Mammary epithelial cell (primary cell): ENCODE measurements at regions of chr3 and their contacts with region 1.

Region 1: DNA sequence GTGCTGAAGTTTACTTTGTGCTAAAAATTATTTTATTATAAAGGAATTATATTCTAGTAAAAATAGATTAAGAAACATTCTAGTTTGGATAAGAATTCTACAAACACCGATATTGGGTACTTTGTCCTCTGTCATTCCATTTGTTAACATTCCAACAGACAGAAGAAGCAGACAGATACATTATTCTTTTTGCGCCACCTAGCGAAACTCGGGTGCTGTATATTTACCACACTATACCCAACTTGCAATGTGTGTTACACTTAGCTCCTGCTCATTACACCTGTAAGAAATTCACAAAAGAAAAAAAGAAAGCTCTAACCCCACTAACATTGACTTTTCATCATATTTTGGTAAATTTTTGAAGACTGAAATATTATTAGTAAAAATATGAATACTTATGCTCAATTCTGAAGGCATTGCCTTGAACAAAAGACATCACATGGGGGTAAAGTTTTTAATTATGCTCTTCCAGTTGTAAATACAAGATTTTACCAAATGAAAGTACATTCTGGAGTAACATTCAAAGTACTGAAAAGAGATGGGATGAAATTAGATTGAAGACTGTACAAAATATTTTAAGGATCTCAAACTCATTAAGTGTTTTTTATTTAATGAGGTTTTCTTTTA is 136.5 kb upstream of the MLF1 start:
- DNase-seq: peak; percentile 63
- H3K4me3 ChIP-seq: no peak overlapping the region
- H3K27ac ChIP-seq: no peak overlapping the region
- H3K4me1 ChIP-seq: no peaks in the 10 kb centered on the region
- H3K27me3 ChIP-seq: no peaks in the 10 kb centered on the region
- CTCF ChIP-seq: peak; percentile 78 to 79

Region 2: GRCh38 chr3:157606011-157606851 is 828.3 kb before region 1 on chr3:
- CTCF ChIA-PET with region 1: interaction called, 6 read pairs
- dilution Hi-C with region 1: no loop called
- in situ Hi-C with region 1: loop called in 1 of 2 experiments (anchors 25 kb)
- intact Hi-C with region 1: no loop called
- DNase-seq: peak; percentile 47
- H3K4me3 ChIP-seq: no peak overlapping the region
- H3K27ac ChIP-seq: no peak overlapping the region
- H3K4me1 ChIP-seq: no peaks in the 10 kb centered on the region
- H3K27me3 ChIP-seq: no peaks in the 10 kb centered on the region
- CTCF ChIP-seq: peak; percentile 70 to 86

Region 3: DNA sequence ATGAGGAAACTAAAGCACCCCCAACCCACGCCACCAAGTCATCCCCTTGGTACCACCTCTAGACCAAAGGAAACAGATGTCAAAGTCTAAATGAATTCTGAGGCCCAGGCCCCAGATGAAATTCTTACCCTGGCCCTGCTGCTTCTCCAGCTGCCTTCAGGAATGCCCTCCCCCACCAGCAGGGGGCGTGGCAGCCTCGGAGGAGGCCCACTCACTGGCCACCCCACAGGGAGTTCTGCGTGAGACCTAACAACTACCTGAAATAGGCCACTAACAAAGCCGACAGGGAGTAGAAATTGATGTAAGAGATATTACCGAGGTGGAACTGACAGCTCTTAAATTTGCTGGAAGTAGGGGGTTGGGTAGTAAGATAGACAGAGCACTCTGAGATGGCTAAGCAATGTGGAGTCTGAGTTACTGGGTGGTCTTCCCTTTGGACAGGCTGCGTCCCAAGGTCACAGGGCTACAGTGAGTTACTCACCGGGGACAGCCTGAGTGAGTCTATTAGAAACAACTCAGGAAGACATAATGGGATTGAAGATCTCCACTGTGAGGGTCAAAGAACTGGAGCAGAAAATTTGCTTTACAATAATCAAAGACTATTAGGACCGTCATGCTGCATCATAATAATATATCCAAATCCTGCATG is 569.0 kb before region 1 on chr3:
- CTCF ChIA-PET with region 1: no interaction called
- dilution Hi-C with region 1: no loop called
- in situ Hi-C with region 1: no loop called
- intact Hi-C with region 1: loop called (anchors 1 kb)
- DNase-seq: peak; percentile 8
- H3K4me3 ChIP-seq: no peak overlapping the region
- H3K27ac ChIP-seq: no peak overlapping the region
- H3K4me1 ChIP-seq: no peaks in the 10 kb centered on the region
- H3K27me3 ChIP-seq: no peaks in the 10 kb centered on the region
- CTCF ChIP-seq: peak; percentile 72 to 76

Region 4: DNA sequence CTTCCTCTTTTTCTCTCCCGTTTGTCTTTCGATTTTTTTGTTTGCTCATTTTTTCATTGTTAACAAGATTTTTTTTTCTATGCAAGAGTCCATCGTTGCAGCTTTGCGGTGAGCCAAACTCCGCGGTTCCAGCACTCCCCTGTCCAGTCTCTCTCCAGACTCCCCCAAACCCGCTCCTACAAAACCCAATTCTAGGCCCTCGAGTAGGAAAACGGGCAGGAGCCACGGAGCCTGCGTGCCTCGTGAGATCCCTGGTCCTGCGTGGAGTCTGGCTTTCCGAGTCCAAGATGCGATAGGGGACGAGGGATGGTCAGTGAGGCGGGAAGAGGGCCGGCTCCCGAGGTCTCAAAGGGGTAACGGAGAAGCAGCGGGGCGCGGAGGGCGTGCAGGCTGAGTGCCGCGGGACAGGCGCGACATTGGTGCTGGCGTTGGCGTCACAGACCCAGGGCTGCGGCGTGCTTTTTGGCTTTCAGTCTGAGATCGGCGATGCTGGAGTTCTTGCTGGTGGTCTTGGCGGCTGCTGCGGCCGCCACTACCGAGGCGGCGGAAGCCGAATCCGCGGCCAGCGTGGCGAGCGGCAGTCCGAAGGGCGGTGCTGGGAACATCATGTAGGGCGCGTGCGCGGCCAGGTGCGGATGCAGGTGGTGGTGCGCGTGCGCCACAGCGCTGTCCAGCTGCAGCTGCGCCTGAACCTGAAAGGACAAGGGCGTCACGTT is 336.8 kb before region 1 on chr3:
- CTCF ChIA-PET with region 1: no interaction called
- dilution Hi-C with region 1: no loop called
- in situ Hi-C with region 1: loop called in 1 of 2 experiments (anchors 25 kb)
- intact Hi-C with region 1: no loop called
- DNase-seq: peak; percentile 80
- H3K4me3 ChIP-seq: peak overlapping the region; percentile 47 to 84 (median 68)
- H3K27ac ChIP-seq: no peak overlapping the region
- H3K4me1 ChIP-seq: peaks cover 6% of the 10 kb centered on the region
- H3K27me3 ChIP-seq: peaks cover 58% of the 10 kb centered on the region
- CTCF ChIP-seq: no peak

Region 5: GRCh38 chr3:158261371-158261979 is 173.1 kb before region 1 on chr3:
- CTCF ChIA-PET with region 1: interaction called, 4 read pairs
- dilution Hi-C with region 1: no loop called
- in situ Hi-C with region 1: no loop called
- intact Hi-C with region 1: loop called (anchors 2 kb)
- DNase-seq: no peak
- H3K4me3 ChIP-seq: no peak overlapping the region
- H3K27ac ChIP-seq: no peak overlapping the region
- H3K4me1 ChIP-seq: no peaks in the 10 kb centered on the region
- H3K27me3 ChIP-seq: no peaks in the 10 kb centered on the region
- CTCF ChIP-seq: peak in 1 of 2 donors; percentile 14

Region 6: GRCh38 chr3:158532099-158532734 is 97.7 kb after region 1 on chr3:
- CTCF ChIA-PET with region 1: no interaction called
- dilution Hi-C with region 1: no loop called
- in situ Hi-C with region 1: no loop called
- intact Hi-C with region 1: loop called (anchors 5 kb)
- DNase-seq: peak; percentile 24
- H3K4me3 ChIP-seq: no peak overlapping the region
- H3K27ac ChIP-seq: no peak overlapping the region
- H3K4me1 ChIP-seq: no peaks in the 10 kb centered on the region
- H3K27me3 ChIP-seq: no peaks in the 10 kb centered on the region
- CTCF ChIP-seq: peak; percentile 45 to 68

Region 7: DNA sequence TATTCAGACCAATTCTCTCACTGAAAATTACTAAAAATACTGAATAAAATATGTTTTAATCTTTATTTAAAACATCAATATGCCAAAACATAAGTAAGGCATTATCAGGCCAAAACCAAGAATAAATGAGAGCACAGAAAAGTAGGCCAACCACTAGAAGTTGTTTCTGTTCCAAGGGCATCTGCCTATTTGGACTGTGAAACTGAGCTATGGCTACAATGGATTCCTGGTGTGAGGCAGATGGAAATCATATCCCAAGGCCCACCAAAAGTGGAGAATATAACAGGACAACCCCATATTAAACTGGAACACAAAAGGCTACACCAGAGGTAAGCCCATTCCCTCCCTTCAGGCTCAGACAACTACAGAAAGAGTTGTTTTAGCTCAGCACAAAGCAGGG is 1251.3 kb after region 1 on chr3:
- CTCF ChIA-PET with region 1: no interaction called
- dilution Hi-C with region 1: no loop called
- in situ Hi-C with region 1: no loop called
- intact Hi-C with region 1: no loop called
- DNase-seq: no peak
- H3K4me3 ChIP-seq: no peak overlapping the region
- H3K27ac ChIP-seq: no peak overlapping the region
- H3K4me1 ChIP-seq: no peaks in the 10 kb centered on the region
- H3K27me3 ChIP-seq: no peaks in the 10 kb centered on the region
- CTCF ChIP-seq: no peak